MCF 10A (cell line): ENCODE measurements at regions of chr5 and their contacts with region 1.

Region 1: GRCh38 chr5:139765409-139766217 is 30.0 kb upstream of the PSD2 start:
- DNase-seq: peak; percentile 85
- H3K4me3 Mint-ChIP-seq: peak overlapping the region; percentile 54
- H3K27ac Mint-ChIP-seq: no peak overlapping the region
- H3K4me1 Mint-ChIP-seq: peaks cover 13% of the 10 kb centered on the region
- H3K27me3 Mint-ChIP-seq: no peaks in the 10 kb centered on the region
- CTCF ChIP-seq: peak; percentile 98

Region 2: DNA sequence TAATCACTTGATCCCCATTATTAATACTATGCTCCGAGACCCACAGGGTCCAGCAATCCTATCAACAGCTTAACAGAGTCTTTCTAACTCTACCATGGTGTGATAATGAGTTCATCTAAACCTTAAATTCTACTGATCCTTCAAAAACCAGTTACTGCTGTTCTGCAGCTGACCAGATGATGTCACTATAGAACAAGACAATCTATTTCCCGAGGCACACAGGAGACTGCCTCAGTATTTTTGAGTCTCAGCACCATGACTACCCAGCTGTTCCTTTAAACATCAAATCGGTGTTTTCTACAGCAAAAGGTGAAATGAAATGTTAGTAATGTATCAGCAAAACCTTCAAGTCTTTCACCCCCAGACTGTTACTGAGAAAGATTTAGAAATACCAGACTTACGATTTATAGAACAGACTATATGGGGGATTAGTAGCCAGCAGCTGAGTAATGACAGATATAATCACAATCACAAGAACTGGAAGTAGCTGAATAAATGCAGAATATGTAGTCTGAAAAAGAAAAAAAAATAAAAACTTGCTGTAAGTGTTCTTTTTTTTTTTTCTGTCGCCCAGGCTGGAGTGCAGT is 343.2 kb before region 1 on chr5:
- CTCF ChIA-PET with region 1: interaction called, 30 read pairs
- POLR2A ChIA-PET with region 1: interaction called, 3 read pairs
- intact Hi-C with region 1: loop called (anchors 1 kb)
- DNase-seq: peak; percentile 84
- H3K4me3 Mint-ChIP-seq: no peak overlapping the region
- H3K27ac Mint-ChIP-seq: peak overlapping the region; percentile 57
- H3K4me1 Mint-ChIP-seq: no peaks in the 10 kb centered on the region
- H3K27me3 Mint-ChIP-seq: no peaks in the 10 kb centered on the region
- CTCF ChIP-seq: peak; percentile 93

Region 3: GRCh38 chr5:139660923-139661814 is 104.4 kb before region 1 on chr5:
- CTCF ChIA-PET with region 1: interaction called, 16 read pairs
- POLR2A ChIA-PET with region 1: no interaction called
- intact Hi-C with region 1: no loop called
- DNase-seq: peak; percentile 97
- H3K4me3 Mint-ChIP-seq: peak overlapping the region; percentile 44
- H3K27ac Mint-ChIP-seq: peak overlapping the region; percentile 54
- H3K4me1 Mint-ChIP-seq: peaks cover 26% of the 10 kb centered on the region
- H3K27me3 Mint-ChIP-seq: no peaks in the 10 kb centered on the region
- CTCF ChIP-seq: no peak

Region 4: GRCh38 chr5:139690064-139690802 is 75.4 kb before region 1 on chr5:
- CTCF ChIA-PET with region 1: interaction called, 20 read pairs
- POLR2A ChIA-PET with region 1: no interaction called
- intact Hi-C with region 1: loop called (anchors 10 kb)
- DNase-seq: peak; percentile 66
- H3K4me3 Mint-ChIP-seq: no peak overlapping the region
- H3K27ac Mint-ChIP-seq: no peak overlapping the region
- H3K4me1 Mint-ChIP-seq: peaks cover 6% of the 10 kb centered on the region
- H3K27me3 Mint-ChIP-seq: no peaks in the 10 kb centered on the region
- CTCF ChIP-seq: peak; percentile 84

Region 5: GRCh38 chr5:139725073-139725830 is 40.4 kb before region 1 on chr5:
- CTCF ChIA-PET with region 1: interaction called, 11 read pairs
- POLR2A ChIA-PET with region 1: no interaction called
- intact Hi-C with region 1: no loop called
- DNase-seq: peak; percentile 53
- H3K4me3 Mint-ChIP-seq: no peak overlapping the region
- H3K27ac Mint-ChIP-seq: no peak overlapping the region
- H3K4me1 Mint-ChIP-seq: no peaks in the 10 kb centered on the region
- H3K27me3 Mint-ChIP-seq: no peaks in the 10 kb centered on the region
- CTCF ChIP-seq: no peak

Region 6: GRCh38 chr5:139745800-139746690 is 19.6 kb before region 1 on chr5:
- CTCF ChIA-PET with region 1: interaction called, 60 read pairs
- POLR2A ChIA-PET with region 1: no interaction called
- intact Hi-C with region 1: no loop called
- DNase-seq: peak; percentile 90
- H3K4me3 Mint-ChIP-seq: peak overlapping the region; percentile 62
- H3K27ac Mint-ChIP-seq: no peak overlapping the region
- H3K4me1 Mint-ChIP-seq: peaks cover 13% of the 10 kb centered on the region
- H3K27me3 Mint-ChIP-seq: peaks cover 37% of the 10 kb centered on the region
- CTCF ChIP-seq: no peak

Region 7: DNA sequence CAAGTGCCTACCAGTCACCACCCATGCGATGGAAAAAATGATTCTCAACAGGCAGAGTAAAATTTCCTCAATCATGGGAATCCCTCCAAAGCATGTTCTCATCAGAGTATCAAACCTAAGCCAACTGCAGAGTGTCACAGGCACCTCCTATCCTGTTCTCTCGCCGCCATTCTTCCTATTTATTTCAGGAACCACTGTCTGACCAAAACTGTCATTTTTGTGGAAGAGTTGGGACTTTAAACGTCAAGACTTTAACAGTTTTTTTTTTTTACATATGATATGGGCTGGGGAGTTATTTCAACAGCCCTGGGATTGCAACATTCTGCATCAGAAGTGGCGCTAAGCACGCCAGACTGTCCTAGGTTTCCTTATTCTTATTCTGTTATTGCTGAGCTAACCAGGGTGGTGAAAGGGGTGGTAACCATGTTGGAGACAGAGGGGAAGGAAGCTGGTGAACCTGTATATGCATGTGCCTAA is 507.8 kb after region 1 on chr5:
- CTCF ChIA-PET with region 1: no interaction called
- POLR2A ChIA-PET with region 1: no interaction called
- intact Hi-C with region 1: no loop called
- DNase-seq: peak; percentile 55
- H3K4me3 Mint-ChIP-seq: no peak overlapping the region
- H3K27ac Mint-ChIP-seq: no peak overlapping the region
- H3K4me1 Mint-ChIP-seq: no peaks in the 10 kb centered on the region
- H3K27me3 Mint-ChIP-seq: no peaks in the 10 kb centered on the region
- CTCF ChIP-seq: no peak